Activated T-helper 1 cell treated with anti-CD3 and anti-CD28 coated beads, Interleukin-12 subunit alpha, Interleukin-12 subunit beta, Interleukin-2, Interleukin-4 antibody, amounts not matched to agents 30 ng/mL and 10 ng/mL and 1 ng/mL, durations not matched to agents 14 hours and 24 hours and 36 hours (primary cell): ENCODE measurements at regions of chr20 and their contacts with region 1.

Region 1: GRCh38 chr20:18137412-18138265 is at the starts of genes KAT14 and PET117:
- DNase-seq: peak; percentile 90
- H3K4me3 Mint-ChIP-seq: peak within 1 kb of the TSS; percentile 90
- H3K27ac Mint-ChIP-seq: peak within 1 kb of the TSS; percentile 82
- H3K4me1 Mint-ChIP-seq: peaks cover 29% of the 10 kb centered on the region
- H3K27me3 Mint-ChIP-seq: no peaks in the 10 kb centered on the region
- total RNA-seq, gene KAT14: 17.1 and 17.9 TPM in 2 replicates
- total RNA-seq, gene PET117: 16.3 and 16.7 TPM in 2 replicates

Region 2: GRCh38 chr20:17536944-17537444 is 600.6 kb before region 1 on chr20:
- intact Hi-C with region 1: loop called (anchors 10 kb)
- DNase-seq: peak; percentile 63
- H3K4me3 Mint-ChIP-seq: no peak overlapping the region
- H3K27ac Mint-ChIP-seq: no peak overlapping the region
- H3K4me1 Mint-ChIP-seq: peaks cover 40% of the 10 kb centered on the region
- H3K27me3 Mint-ChIP-seq: peaks cover 24% of the 10 kb centered on the region

Region 3: GRCh38 chr20:17682103-17682888 is 455.3 kb before region 1 on chr20 and contains the start of gene RRBP1:
- intact Hi-C with region 1: loop called (anchors 1 kb)
- DNase-seq: peak; percentile 97
- H3K4me3 Mint-ChIP-seq: peak within 1 kb of the TSS; percentile 88
- H3K27ac Mint-ChIP-seq: peak within 1 kb of the TSS; percentile 91
- H3K4me1 Mint-ChIP-seq: peaks cover 24% of the 10 kb centered on the region
- H3K27me3 Mint-ChIP-seq: peaks cover 26% of the 10 kb centered on the region
- total RNA-seq, gene RRBP1: 54.8 and 56.0 TPM in 2 replicates

Region 4: GRCh38 chr20:17995967-17996819 is 141.4 kb before region 1 on chr20:
- intact Hi-C with region 1: loop called (anchors 10 kb)
- DNase-seq: peak; percentile 46
- H3K4me3 Mint-ChIP-seq: no peak overlapping the region
- H3K27ac Mint-ChIP-seq: no peak overlapping the region
- H3K4me1 Mint-ChIP-seq: peaks cover 43% of the 10 kb centered on the region
- H3K27me3 Mint-ChIP-seq: peaks cover 3% of the 10 kb centered on the region

Region 5: DNA sequence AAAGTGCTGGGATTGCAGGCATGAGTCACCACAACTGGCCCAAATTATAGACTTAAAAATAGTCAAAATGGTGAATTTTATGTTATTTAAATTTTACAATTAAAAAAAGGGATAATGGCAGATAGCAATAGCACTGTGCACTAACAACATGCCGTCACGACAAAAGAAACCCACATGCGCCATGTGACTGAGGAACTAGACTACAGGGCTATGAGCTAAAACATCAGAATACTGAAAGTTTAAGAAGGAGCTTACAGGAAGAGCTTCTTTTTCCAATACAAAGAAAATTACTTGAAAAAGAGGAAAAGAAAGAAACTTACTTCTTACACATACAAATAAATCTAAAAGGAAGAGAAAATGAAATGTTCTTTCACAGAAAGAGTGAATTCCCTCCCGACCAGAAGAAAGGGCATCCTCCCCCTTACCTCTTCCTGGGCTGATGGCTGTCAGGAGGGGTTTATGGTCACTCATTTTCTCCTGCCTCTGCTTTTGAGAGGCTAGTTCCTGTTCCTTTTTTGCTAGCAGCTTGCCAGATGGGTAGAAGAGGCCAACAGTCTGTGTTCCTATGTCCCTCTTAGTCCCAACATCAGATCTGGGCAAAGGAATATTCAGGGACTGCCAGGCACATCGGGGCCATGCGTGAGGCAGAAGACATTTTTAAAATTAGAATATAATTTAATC is 274.7 kb after region 1 on chr20:
- intact Hi-C with region 1: loop called (anchors 1 kb)
- DNase-seq: no peak
- H3K4me3 Mint-ChIP-seq: no peak overlapping the region
- H3K27ac Mint-ChIP-seq: no peak overlapping the region
- H3K4me1 Mint-ChIP-seq: peaks cover 6% of the 10 kb centered on the region
- H3K27me3 Mint-ChIP-seq: no peaks in the 10 kb centered on the region

Region 6: GRCh38 chr20:18566892-18567742 is 429.5 kb after region 1 on chr20 and contains the start of gene SMIM26:
- intact Hi-C with region 1: loop called (anchors 2 kb)
- DNase-seq: peak; percentile 91
- H3K4me3 Mint-ChIP-seq: peak within 1 kb of the TSS; percentile 95
- H3K27ac Mint-ChIP-seq: peak within 1 kb of the TSS; percentile 95
- H3K4me1 Mint-ChIP-seq: peaks cover 10% of the 10 kb centered on the region
- H3K27me3 Mint-ChIP-seq: no peaks in the 10 kb centered on the region
- total RNA-seq, gene SMIM26: 54.9 and 57.9 TPM in 2 replicates